GM13976 (cell line): ENCODE measurements at regions of chr19 and their contacts with region 1.

Region 1: GRCh38 chr19:47436712-47437401 is 17.5 kb upstream of the MEIS3 start:
- DNase-seq: peak; percentile 87
- CTCF ChIP-seq: peak; percentile 90

Region 2: GRCh38 chr19:47707135-47707925 is 270.5 kb after region 1 on chr19:
- in situ Hi-C with region 1: loop called (anchors 5 kb)
- DNase-seq: peak; percentile 82
- CTCF ChIP-seq: peak; percentile 73

Region 3: DNA sequence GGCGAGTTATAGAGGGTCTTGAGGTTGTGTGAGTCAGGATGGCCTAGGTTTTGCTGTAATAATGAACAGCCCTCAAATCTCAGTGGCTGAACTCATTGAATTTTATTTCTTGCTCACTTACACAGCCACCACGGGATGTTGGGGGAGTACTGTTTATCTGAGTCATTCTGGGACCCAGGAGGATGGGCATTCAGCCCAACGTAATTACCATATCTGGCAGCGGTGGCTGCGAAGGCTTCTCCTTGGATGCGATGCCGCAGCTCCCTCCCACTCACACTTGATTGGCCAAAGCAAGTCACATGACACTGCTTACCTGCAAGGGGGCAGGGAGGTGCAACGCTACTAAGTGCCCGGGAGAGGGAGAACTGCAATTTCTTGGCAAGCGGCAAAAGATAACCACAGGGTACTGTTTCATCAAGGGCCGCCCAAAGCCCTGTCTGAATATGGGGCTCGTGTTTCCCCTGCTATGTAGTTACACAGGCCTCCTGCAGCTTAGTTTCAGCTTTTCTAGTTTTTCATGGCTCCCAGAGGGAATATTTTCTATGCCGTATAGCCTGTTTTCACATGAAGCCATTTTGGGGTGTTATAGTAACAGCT is 753.5 kb after region 1 on chr19:
- in situ Hi-C with region 1: no loop called
- DNase-seq: no peak
- CTCF ChIP-seq: no peak